Adrenal gland (tissue), 19 donors: ENCODE measurements at regions of chrX and their contacts with region 1.

Region 1: DNA sequence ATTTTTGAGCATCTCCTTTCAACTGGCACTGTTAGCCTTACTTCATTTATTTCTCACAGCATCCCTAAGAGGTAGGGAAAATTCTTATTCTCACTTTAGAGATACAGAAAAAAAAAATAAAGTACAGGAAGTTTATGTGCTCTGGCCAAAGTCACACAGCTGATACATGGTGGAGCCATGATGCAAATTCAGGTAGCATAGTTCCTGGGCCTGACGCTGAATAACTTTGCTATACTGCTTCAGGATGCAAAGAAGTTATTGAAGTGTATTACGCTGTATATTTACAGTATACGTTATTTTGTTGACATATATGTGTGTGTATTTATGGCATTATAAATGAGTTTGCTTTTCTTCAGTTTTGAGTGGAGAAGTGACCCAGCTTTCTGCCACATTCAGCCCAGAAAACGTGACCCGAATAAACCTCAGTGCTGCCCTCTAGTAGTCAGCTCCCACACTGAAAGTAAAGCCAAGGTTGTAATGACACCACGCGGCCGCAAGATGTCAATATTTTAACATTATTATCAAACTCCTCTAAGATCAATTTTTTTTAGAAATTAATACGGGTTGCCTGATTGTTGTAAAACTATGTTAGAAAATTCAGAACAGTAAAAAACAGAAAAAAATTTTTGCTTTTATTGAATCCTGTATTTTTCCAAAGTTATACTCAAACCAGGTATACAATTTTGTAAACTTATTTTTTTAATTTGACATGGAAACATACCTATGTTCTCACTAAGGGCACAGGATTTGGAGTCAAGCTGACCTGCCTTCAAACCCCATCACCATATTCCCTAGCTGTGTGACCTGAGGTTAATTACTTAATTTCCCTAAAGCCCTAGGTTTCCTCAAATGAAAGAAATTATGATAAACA is 3.8 kb upstream of the GUCY2F start:
- DNase-seq: peak; percentile 55 to 87 (median 75)
- H3K4me3 ChIP-seq: no peak overlapping the region
- H3K27ac ChIP-seq: no peak overlapping the region
- H3K4me1 ChIP-seq: no peaks in the 10 kb centered on the region
- H3K27me3 ChIP-seq: peaks cover 35% of the 10 kb centered on the region
- CTCF ChIP-seq: peak; percentile 95 to 99 (median 96)
- POLR2A ChIP-seq: no peak

Region 2: GRCh38 chrX:109635176-109635575 is 149.5 kb after region 1 on chrX:
- intact Hi-C with region 1: loop called (anchors 5 to 10 kb)
- DNase-seq: peak in 1 of 7 donors; percentile 1
- H3K4me3 ChIP-seq: no peak overlapping the region
- H3K27ac ChIP-seq: no peak overlapping the region
- H3K4me1 ChIP-seq: no peaks in the 10 kb centered on the region
- H3K27me3 ChIP-seq: no peaks in the 10 kb centered on the region
- CTCF ChIP-seq: peak; percentile 26 to 39 (median 32)
- POLR2A ChIP-seq: no peak